HepG2 (cell line): ENCODE measurements at regions of chr15 and their contacts with region 1.

Region 1: DNA sequence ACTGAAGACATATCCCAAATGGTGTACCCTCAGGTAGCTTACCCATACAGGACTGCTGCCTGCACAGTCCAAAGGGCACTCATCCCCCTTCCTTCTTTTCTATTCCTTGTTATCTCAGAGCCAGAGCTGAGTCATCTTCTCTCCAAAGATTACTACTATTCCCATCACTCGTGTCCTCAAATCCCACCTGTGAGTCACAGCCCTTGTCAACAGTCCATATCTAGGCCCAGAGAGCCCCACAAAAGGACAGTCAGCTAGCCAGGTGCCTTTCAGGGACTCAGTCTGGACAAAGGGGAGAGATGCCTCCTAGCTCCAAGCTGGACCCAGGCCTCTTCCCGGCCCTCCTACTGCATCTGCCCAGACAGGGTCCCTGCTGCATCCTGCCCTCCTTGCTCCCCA is 11.0 kb downstream of the PARP16 start:
- DNase-seq: peak; percentile 74
- ATAC-seq: peak; percentile 62
- H3K4me3 ChIP-seq: no peak overlapping the region
- H3K27ac ChIP-seq: no peak overlapping the region
- H3K4me1 ChIP-seq: peaks cover 33% of the 10 kb centered on the region
- H3K27me3 ChIP-seq: no peaks in the 10 kb centered on the region
- CTCF ChIP-seq: no peak
- EP300 ChIP-seq: peak in 1 of 2 experiments; percentile 51; a peak in 2 of 4 replicates
- POLR2A ChIP-seq: no peak
- RAD21 ChIP-seq: no peak

Region 2: DNA sequence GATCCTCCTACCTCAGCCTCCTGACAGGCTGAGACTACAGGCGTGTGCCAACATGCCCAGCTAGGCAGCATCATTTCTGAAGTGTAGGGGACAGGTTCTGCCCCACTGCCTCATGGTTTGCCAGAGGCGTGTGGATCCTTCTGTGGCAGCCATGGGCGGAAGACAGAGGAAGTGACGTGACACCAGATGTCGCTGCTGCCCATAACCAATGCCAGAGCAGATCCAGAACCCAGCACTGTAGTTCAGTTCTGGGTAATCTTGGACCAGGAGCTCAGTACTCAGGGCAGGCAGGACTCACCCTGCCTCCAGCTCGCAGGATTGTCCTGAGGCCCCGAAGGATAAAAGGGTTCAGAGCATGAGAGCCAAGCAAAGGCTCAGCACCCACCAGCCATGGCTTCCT is 508.5 kb before region 1 on chr15:
- CTCF ChIA-PET with region 1: no interaction called
- POLR2A ChIA-PET with region 1: no interaction called
- in situ Hi-C with region 1: no loop called
- intact Hi-C with region 1: no loop called
- DNase-seq: no peak
- ATAC-seq: no peak; the same call in 2 of the 3 replicates
- H3K4me3 ChIP-seq: no peak overlapping the region
- H3K27ac ChIP-seq: no peak overlapping the region
- H3K4me1 ChIP-seq: peaks cover 18% of the 10 kb centered on the region
- H3K27me3 ChIP-seq: peaks cover 1 to 3% of the 10 kb centered on the region in 2 experiments; a peak in 2 of 5 replicates
- CTCF ChIP-seq: peak; percentile 50
- EP300 ChIP-seq: no peak
- POLR2A ChIP-seq: no peak
- RAD21 ChIP-seq: 0 out of 2 replicates have a peak, but pooled peaks have one; percentile 12

Region 3: DNA sequence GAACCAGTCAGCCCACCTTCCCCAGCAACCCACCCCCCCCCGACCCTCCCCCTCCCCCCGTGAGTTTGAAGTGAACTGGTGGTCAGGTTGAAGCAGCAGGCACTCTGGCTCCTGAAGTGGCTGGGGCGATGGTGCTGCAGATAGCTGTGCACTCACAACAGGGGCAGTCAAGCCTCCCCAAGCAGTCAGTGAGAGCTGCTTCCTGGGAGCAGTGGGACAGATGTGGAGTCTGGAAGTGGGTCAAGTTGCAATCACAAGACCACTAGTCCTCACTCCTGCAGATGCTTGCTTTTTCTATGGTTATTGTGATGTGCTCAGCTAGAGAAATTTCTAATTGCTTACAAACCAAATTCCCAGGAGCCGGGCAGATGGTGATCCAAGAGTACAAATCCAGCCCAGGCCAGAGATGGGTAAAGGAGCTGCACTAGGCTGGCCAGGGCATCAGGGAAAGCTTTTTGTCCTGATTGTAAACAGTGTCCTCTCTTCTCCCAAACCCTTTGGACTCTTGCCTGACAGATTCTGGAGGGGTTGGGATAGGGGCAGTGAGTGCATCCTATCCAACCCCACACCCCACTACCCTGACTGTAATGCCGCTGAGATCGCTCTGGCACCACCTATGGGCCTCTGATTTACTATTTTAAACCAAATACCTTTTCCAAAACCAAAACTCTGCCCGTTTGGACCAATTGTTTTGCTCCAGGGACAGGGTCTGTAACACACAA is 80.7 kb before region 1 on chr15:
- CTCF ChIA-PET with region 1: interaction called, 28 read pairs
- POLR2A ChIA-PET with region 1: no interaction called
- in situ Hi-C with region 1: loop called (anchors 5 kb)
- intact Hi-C with region 1: no loop called
- DNase-seq: no peak
- ATAC-seq: 0 out of 3 replicates have a peak, but pooled peaks have one; percentile 30
- H3K4me3 ChIP-seq: no peak overlapping the region
- H3K27ac ChIP-seq: no peak overlapping the region
- H3K4me1 ChIP-seq: peaks cover 12% of the 10 kb centered on the region; the same call in 1 of the 2 replicates
- H3K27me3 ChIP-seq: peaks cover 2 to 3% of the 10 kb centered on the region in 2 experiments; a peak in 3 of 5 replicates
- CTCF ChIP-seq: no peak
- EP300 ChIP-seq: no peak
- POLR2A ChIP-seq: no peak
- RAD21 ChIP-seq: no peak

Region 4: GRCh38 chr15:65212097-65212496 is 63.6 kb before region 1 on chr15:
- CTCF ChIA-PET with region 1: no interaction called
- POLR2A ChIA-PET with region 1: no interaction called
- in situ Hi-C with region 1: no loop called
- intact Hi-C with region 1: no loop called
- DNase-seq: peak; percentile 42
- ATAC-seq: peak; percentile 80
- H3K4me3 ChIP-seq: no peak overlapping the region
- H3K27ac ChIP-seq: no peak overlapping the region
- H3K4me1 ChIP-seq: peaks cover 23% of the 10 kb centered on the region
- H3K27me3 ChIP-seq: peaks cover 5 to 47% of the 10 kb centered on the region in 2 experiments; a peak in 4 of 5 replicates
- CTCF ChIP-seq: peak; percentile 66
- EP300 ChIP-seq: no peak
- POLR2A ChIP-seq: no peak
- RAD21 ChIP-seq: no peak

Region 5: DNA sequence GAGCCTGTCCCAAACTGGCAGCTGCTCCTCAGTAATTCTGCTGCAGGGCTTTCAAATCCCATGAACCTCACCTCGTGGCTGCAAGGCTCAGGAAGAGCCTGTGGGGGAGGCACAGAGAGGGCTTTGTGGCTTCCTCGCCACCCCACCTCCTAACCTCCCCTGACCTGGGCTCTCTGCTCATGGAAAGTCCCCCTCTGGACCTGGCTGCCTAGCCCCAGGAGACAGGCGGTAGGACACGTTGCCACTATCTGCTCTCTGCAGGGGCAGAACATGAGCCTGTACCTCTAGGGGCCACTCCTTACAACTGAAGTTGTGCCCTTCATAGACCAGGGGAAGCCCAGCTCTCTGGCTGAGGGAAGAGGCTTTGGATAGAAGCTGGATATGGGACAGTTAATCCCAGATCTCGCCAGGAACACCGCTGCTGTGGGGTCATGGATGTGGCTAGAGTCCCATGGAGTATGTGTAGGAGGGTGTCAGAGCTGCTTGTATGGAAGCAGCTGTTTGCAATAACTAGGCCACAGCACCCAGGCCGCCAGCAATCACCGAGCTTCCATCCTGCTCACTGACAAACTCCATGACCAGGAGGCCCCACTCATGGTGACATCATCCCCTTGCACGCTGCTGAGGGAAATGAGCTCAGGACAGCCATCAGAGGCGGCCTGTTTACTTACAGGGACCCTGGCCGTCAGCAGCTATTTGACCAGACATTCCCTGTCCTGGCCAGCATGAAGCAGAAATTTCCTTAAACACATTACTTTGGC is 30.5 kb before region 1 on chr15:
- CTCF ChIA-PET with region 1: no interaction called
- POLR2A ChIA-PET with region 1: interaction called, 11 read pairs
- in situ Hi-C with region 1: no loop called
- intact Hi-C with region 1: no loop called
- DNase-seq: peak; percentile 75
- ATAC-seq: peak; percentile 81
- H3K4me3 ChIP-seq: peak overlapping the region in 2 of 3 experiments; percentile 19 to 52; a peak in 4 of 6 replicates
- H3K27ac ChIP-seq: peak overlapping the region; percentile 37
- H3K4me1 ChIP-seq: peaks cover 51% of the 10 kb centered on the region
- H3K27me3 ChIP-seq: no peaks in the 10 kb centered on the region
- CTCF ChIP-seq: no peak
- EP300 ChIP-seq: no peak
- POLR2A ChIP-seq: peak in 1 of 2 experiments; percentile 36; a peak in 1 of 4 replicates
- RAD21 ChIP-seq: no peak

Region 6: GRCh38 chr15:65286704-65287519 is 11.2 kb after region 1 on chr15 and contains the start of gene PARP16:
- CTCF ChIA-PET with region 1: no interaction called
- POLR2A ChIA-PET with region 1: interaction called, 26 read pairs
- in situ Hi-C with region 1: no loop called
- intact Hi-C with region 1: no loop called
- DNase-seq: peak; percentile 80
- ATAC-seq: peak; percentile 94
- H3K4me3 ChIP-seq: peak within 1 kb of the TSS; percentile 53 to 82 (median 78)
- H3K27ac ChIP-seq: peak within 1 kb of the TSS; percentile 88
- H3K4me1 ChIP-seq: peaks cover 46% of the 10 kb centered on the region
- H3K27me3 ChIP-seq: no peaks in the 10 kb centered on the region; a peak in 1 of 5 replicates
- CTCF ChIP-seq: peak; percentile 71
- EP300 ChIP-seq: no peak
- POLR2A ChIP-seq: peak; percentile 52 to 69
- RAD21 ChIP-seq: peak; percentile 46; the same call in 1 of the 2 replicates
- total RNA-seq, gene PARP16: 6.7 and 6.8 TPM in 2 replicates

Region 7: GRCh38 chr15:65682404-65682911 is 406.7 kb after region 1 on chr15:
- CTCF ChIA-PET with region 1: no interaction called
- POLR2A ChIA-PET with region 1: no interaction called
- in situ Hi-C with region 1: no loop called
- intact Hi-C with region 1: no loop called
- DNase-seq: no peak
- ATAC-seq: no peak
- H3K4me3 ChIP-seq: no peak overlapping the region
- H3K27ac ChIP-seq: no peak overlapping the region
- H3K4me1 ChIP-seq: no peaks in the 10 kb centered on the region
- H3K27me3 ChIP-seq: no peaks in the 10 kb centered on the region
- CTCF ChIP-seq: no peak
- EP300 ChIP-seq: no peak
- POLR2A ChIP-seq: no peak
- RAD21 ChIP-seq: no peak